ENCODE measurements at regions of chr10 and their contacts with region 1.

Region 1: DNA sequence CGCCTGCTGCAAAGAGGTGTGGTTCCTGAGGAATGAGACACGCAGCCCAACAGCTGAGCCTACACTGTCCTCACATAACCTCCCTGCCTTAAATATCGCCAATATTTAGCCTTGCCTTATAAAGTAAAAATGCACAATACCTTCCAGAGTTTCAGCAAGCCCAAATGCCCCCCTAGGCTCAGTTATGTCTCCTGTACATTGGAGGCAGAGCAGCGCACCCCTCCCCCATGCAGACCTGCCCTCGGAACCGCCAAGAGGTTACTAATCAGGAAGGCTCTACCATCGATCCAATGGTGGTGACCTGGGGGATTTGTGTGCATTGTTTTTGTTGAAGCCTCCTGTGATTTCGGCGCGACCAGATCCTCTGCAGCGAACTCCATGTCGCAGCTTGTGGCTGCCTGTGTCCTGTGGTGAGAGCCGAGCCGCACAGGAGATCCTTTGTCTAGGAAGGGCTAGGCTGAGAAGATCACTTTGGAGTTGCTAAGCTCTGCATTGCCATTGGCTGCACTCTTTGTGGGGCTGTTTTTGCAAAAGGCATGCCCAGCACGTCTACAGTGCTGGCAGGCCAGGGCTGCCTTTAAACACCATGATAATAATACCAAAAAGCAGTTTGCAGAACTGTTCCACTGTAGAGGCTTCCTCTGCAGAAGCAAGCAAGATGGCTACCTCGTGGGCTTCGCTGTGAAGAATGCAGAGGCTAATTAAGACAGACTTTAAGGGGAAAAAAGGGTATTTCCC is 40.1 kb downstream of the TET1 start:
- DNase-seq: peak; percentile 53 to 64
- H3K4me3 ChIP-seq: peak overlapping the region; percentile 40 to 70 (median 51)
- H3K27ac ChIP-seq: peak overlapping the region; percentile 59 to 61
- H3K4me1 ChIP-seq: no peaks in the 10 kb centered on the region
- H3K27me3 ChIP-seq: no peaks in the 10 kb centered on the region
- CTCF ChIP-seq: no peak
- POLR2A ChIP-seq: no peak

Region 2: GRCh38 chr10:68082872-68083271 is 517.3 kb before region 1 on chr10:
- intact Hi-C with region 1: loop called (anchors 10 kb)
- DNase-seq: no peak
- H3K4me3 ChIP-seq: no peak overlapping the region
- H3K27ac ChIP-seq: no peak overlapping the region
- H3K4me1 ChIP-seq: no peaks in the 10 kb centered on the region
- H3K27me3 ChIP-seq: no peaks in the 10 kb centered on the region
- CTCF ChIP-seq: no peak
- POLR2A ChIP-seq: no peak

Region 3: GRCh38 chr10:68560186-68560942 is 39.8 kb before region 1 on chr10 and contains the start of gene TET1:
- intact Hi-C with region 1: loop called (anchors 2 kb)
- DNase-seq: peak in 1 of 2 donors; percentile 54
- H3K4me3 ChIP-seq: peak within 1 kb of the TSS; percentile 69 to 98 (median 82)
- H3K27ac ChIP-seq: peak within 1 kb of the TSS; percentile 58 to 79
- H3K4me1 ChIP-seq: no peaks in the 10 kb centered on the region
- H3K27me3 ChIP-seq: no peaks in the 10 kb centered on the region
- CTCF ChIP-seq: no peak
- POLR2A ChIP-seq: no peak
- total RNA-seq, gene TET1: 6.9 to 12.8 (median 6.9) TPM

Measured in breast epithelium (tissue), 4 donors.